Activated T-helper 1 cell treated with anti-CD3 and anti-CD28 coated beads, Interleukin-12 subunit alpha, Interleukin-12 subunit beta, Interleukin-2, Interleukin-4 antibody, amounts not matched to agents 30 ng/mL and 10 ng/mL and 1 ng/mL, durations not matched to agents 14 hours and 24 hours and 36 hours (primary cell): ENCODE measurements at regions of chr6 and their contacts with region 1.

Region 1: DNA sequence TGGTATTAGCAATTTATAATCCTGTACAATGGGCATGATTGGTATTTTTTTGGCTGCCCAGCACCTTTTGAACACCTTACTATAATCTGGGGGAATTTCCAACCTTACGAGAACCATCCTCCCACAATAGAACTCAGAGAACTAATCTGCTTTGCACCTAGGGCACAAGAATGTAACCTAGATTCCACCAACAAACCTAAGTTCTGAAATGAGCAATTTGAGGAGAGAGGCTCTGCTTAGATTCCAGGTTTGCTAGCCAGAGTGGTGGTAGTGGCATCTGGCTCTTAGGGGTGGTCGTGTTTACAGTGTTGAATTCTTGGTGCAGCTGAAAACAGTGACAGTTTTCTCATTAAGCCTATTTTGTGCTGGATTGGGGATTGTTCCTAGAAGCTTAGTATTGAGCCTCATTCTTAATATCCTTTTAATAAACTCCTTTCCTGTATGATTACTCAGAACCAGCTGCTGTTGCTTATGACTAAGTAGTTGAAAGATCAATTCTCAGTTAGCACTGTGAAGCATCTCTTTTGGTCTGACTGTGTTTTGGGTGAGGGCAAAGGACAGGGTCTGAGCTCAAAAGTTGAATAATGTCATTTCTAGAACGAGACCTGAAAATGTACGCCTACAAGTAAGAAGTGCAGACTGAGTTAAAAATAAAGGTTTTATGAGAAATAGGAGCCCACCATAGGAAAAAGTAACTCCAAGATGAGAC is 385.6 kb downstream of the CDKAL1 start:
- DNase-seq: no peak
- H3K4me3 Mint-ChIP-seq: no peak overlapping the region
- H3K27ac Mint-ChIP-seq: peak overlapping the region; percentile 82
- H3K4me1 Mint-ChIP-seq: peaks cover 20% of the 10 kb centered on the region
- H3K27me3 Mint-ChIP-seq: no peaks in the 10 kb centered on the region

Region 2: DNA sequence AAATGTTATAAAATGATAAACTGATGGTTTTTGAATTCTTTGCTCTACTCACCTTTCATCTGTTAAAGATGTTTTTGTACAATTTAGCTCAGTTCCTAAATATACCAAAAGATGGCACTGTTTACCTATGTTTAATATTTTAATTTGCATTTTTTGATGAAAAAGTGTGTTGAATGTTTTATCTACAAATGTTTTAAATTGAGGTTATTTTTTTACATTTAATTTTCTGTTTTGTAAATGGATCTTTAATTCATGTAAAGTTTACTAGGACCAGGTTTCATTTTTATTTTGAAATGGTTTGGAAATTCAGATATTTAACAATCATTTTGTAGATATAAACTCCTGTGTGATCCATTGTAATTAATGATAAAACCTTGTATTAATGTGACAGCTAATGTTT is 355.6 kb before region 1 on chr6:
- intact Hi-C with region 1: loop called (anchors 1 kb)
- DNase-seq: no peak
- H3K4me3 Mint-ChIP-seq: no peak overlapping the region
- H3K27ac Mint-ChIP-seq: no peak overlapping the region
- H3K4me1 Mint-ChIP-seq: peaks cover 23% of the 10 kb centered on the region
- H3K27me3 Mint-ChIP-seq: no peaks in the 10 kb centered on the region

Region 3: DNA sequence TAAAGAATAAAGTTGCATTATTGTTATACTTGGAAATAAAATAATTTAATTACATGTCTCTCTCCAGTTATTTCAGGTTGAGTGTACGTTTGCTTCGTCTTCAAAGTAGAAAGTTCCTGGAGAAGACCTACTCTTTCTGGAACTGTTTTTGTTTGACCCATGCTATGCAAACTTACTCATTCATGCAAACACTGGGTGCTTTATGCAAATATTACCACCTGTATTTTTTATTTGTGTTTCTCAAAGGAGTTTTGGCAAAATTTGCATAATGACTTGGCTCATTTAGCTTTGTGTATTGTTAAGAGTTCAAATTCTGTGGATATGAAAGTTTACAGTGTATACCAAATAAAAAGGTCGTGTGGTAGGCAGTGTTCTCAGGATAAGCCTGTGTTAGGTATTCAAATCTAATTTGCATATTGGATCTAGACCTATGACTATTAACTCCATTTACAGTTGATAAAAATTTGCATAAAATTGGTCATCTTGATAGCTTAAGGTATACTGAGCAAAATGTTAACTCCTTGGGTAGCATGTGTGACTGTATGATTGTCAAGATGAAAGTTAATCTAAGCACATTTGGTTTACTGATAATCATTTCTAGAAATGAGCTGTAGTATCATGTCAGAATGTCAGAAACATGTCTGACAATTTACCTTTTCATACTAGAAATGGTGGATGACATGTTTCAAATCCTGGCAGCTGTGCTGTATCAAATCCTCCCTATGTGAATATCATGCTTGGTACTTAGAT is 320.4 kb before region 1 on chr6:
- intact Hi-C with region 1: loop called (anchors 1 kb)
- DNase-seq: no peak
- H3K4me3 Mint-ChIP-seq: no peak overlapping the region
- H3K27ac Mint-ChIP-seq: no peak overlapping the region
- H3K4me1 Mint-ChIP-seq: peaks cover 9% of the 10 kb centered on the region
- H3K27me3 Mint-ChIP-seq: no peaks in the 10 kb centered on the region

Region 4: DNA sequence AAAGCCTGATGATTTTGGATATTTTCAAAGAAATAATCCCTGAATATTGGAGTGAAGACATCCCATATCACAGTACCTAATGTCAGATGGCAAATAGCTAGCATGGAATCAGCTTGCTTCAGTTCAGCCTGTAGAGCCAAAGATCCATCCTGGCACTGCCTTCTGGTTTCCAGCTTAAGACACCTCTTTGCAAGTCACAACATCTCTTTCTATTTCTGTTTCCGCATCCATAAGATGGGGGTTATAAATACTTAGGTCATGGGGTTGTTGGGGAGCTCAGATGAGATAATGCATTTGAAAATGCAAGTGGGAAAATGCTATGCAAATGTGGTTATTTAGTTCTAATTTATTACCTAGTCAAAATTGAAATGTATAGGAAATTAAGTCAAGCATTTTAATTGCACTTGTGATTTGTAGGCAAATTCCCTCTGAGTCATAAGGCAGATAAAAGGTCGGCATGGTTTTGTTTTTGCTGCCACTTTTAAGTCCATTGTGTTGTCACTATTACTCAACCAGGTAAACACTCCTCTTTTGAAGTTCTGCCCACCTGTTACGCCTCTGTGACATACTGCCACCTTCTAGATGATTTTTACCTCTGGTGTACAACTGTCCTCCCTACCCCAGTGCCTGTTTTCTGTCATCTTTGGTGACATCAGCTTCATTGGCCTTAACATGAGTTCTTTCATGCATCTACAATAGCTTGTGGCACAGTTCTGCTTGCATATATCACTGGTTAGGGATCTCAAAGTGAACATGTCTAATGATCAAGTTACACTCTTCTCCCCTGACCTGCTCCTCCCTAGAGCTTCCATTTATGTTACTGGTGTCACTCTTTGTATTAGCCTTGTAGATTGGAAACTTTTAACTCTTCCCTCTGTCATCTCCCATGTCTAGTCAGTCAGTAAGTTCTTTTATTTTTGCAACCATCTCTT is 288.9 kb before region 1 on chr6:
- intact Hi-C with region 1: no loop called
- DNase-seq: no peak
- H3K4me3 Mint-ChIP-seq: no peak overlapping the region
- H3K27ac Mint-ChIP-seq: no peak overlapping the region
- H3K4me1 Mint-ChIP-seq: peaks cover 30% of the 10 kb centered on the region
- H3K27me3 Mint-ChIP-seq: no peaks in the 10 kb centered on the region

Region 5: DNA sequence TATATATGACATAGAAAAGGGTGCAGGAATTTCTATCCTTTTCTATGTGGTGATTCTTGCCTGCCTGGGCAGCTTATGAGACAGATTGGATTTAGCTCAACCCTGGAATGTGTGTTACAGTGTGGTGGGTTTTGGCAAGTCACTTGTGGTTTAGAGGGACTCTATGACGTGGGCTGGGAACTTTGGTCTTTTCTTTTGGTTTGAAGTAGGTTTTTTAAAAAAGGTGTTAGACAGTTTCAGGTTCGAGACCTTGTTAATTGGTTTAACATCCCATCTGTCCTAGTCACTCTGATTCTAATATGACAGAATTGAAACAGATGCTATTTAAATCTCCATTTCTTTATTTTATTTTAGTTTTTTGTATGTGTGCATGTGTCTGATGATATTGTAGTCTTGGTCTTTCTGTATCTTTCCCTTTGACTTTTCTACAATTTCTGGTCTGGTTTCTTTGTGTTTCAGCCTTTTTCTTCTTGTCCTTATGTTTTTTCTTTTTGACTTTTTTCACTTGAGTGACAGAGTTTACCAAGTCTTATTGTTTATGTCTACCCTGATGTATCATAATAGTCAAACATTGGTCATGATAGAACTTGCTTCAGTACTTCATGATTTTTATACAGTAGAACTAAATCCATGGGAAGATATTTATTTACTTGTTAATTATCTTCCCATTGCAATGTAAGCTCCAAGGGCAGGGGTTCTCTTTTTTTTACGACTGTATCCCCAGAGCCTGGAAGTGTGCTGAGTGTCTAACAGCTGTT is 211.3 kb before region 1 on chr6:
- intact Hi-C with region 1: loop called (anchors 2 kb)
- DNase-seq: no peak
- H3K4me3 Mint-ChIP-seq: no peak overlapping the region
- H3K27ac Mint-ChIP-seq: peak overlapping the region; percentile 75
- H3K4me1 Mint-ChIP-seq: peaks cover 43% of the 10 kb centered on the region
- H3K27me3 Mint-ChIP-seq: no peaks in the 10 kb centered on the region

Region 6: GRCh38 chr6:20846602-20847028 is 73.2 kb before region 1 on chr6:
- intact Hi-C with region 1: loop called (anchors 1 kb)
- DNase-seq: no peak
- H3K4me3 Mint-ChIP-seq: no peak overlapping the region
- H3K27ac Mint-ChIP-seq: no peak overlapping the region
- H3K4me1 Mint-ChIP-seq: peaks cover 27% of the 10 kb centered on the region
- H3K27me3 Mint-ChIP-seq: no peaks in the 10 kb centered on the region

Region 7: GRCh38 chr6:20877008-20877937 is 42.6 kb before region 1 on chr6:
- intact Hi-C with region 1: loop called (anchors 1 kb)
- DNase-seq: peak; percentile 2
- H3K4me3 Mint-ChIP-seq: no peak overlapping the region
- H3K27ac Mint-ChIP-seq: peak overlapping the region; percentile 79
- H3K4me1 Mint-ChIP-seq: peaks cover 15% of the 10 kb centered on the region
- H3K27me3 Mint-ChIP-seq: no peaks in the 10 kb centered on the region

Region 8: DNA sequence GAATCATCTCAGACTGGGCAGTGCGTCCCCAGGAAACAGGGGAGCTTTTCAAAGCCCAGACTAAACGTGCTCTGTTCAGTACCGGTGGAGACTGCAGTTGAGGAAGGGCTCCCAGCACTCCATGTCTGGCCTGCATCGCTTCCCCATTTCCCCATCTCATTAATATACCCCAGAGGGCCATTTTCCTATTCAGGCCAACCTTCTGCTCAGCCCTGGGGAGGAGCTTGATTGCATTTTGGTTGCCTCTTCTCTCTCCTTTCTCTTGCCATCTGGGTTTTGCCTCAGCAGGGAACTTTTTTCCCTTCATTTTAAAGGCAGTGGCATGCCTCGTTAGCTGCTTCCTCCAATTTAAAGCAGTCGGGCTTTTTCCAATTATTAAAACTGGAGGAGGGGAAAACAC is 279.4 kb after region 1 on chr6:
- intact Hi-C with region 1: loop called (anchors 10 kb)
- DNase-seq: no peak
- H3K4me3 Mint-ChIP-seq: no peak overlapping the region
- H3K27ac Mint-ChIP-seq: no peak overlapping the region
- H3K4me1 Mint-ChIP-seq: peaks cover 11% of the 10 kb centered on the region
- H3K27me3 Mint-ChIP-seq: no peaks in the 10 kb centered on the region

Region 9: GRCh38 chr6:21769405-21769861 is 849.6 kb after region 1 on chr6:
- intact Hi-C with region 1: no loop called
- DNase-seq: no peak
- H3K4me3 Mint-ChIP-seq: no peak overlapping the region
- H3K27ac Mint-ChIP-seq: no peak overlapping the region
- H3K4me1 Mint-ChIP-seq: no peaks in the 10 kb centered on the region
- H3K27me3 Mint-ChIP-seq: peaks cover 3% of the 10 kb centered on the region